ENCODE measurements at regions of chr6 and their contacts with region 1.

Region 1: DNA sequence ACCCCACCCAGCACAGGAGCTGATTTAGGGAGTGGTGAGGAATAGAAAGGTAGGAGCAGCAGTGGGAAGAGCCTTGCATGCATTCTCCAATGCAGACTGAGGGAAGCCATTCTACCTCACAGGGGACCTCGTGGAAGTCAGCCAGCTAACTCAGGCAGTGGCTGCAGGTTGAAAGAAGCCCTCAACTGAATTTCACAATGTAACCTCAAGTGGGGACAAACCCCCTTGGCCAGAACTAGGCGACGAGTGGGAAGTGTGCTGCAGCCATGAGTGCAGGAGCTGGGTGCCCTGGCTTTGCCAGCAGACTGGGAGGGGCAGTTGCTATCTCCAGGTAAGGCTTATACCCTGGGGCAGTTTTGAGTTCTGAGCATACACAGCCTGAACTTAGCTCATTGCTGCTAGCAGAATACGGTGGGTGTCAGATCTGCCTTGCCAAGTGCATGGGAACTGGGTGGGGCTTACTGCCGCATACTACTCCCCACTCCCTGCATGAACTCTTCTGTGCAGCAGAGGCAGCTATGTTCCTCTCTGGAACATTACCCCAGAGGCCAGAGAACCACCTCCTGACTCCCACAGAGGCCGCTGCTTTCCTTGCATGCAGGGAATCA is 126.5 kb downstream of the CDK19 start:
- DNase-seq: no peak
- CTCF ChIP-seq: no peak

Region 2: GRCh38 chr6:110671116-110671846 is 17.5 kb before region 1 on chr6:
- CTCF ChIA-PET with region 1: interaction called, 13 read pairs
- POLR2A ChIA-PET with region 1: no interaction called
- DNase-seq: no peak
- CTCF ChIP-seq: no peak

Region 3: DNA sequence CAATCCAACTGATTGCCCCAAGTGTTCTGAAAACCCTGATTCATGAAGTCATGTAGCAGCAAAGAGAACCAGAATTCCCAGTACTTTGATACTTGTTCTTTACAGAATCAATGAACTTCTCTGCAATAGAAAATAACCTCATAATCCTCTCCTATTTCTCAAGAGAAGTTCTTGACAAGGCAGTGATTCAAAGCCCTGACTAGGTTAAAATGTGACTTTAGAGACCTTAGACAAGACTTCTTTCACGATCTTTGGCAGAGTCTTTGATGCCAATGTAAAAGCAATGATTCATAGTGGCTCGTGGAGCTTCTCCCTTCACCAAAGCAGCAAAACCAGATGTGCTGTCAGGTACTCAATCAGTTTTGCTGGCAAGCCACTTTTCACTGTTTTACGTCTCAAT is 31.3 kb after region 1 on chr6:
- CTCF ChIA-PET with region 1: no interaction called
- POLR2A ChIA-PET with region 1: no interaction called
- DNase-seq: no peak
- CTCF ChIP-seq: no peak